ENCODE measurements at regions of chr7 and their contacts with region 1.

Region 1: DNA sequence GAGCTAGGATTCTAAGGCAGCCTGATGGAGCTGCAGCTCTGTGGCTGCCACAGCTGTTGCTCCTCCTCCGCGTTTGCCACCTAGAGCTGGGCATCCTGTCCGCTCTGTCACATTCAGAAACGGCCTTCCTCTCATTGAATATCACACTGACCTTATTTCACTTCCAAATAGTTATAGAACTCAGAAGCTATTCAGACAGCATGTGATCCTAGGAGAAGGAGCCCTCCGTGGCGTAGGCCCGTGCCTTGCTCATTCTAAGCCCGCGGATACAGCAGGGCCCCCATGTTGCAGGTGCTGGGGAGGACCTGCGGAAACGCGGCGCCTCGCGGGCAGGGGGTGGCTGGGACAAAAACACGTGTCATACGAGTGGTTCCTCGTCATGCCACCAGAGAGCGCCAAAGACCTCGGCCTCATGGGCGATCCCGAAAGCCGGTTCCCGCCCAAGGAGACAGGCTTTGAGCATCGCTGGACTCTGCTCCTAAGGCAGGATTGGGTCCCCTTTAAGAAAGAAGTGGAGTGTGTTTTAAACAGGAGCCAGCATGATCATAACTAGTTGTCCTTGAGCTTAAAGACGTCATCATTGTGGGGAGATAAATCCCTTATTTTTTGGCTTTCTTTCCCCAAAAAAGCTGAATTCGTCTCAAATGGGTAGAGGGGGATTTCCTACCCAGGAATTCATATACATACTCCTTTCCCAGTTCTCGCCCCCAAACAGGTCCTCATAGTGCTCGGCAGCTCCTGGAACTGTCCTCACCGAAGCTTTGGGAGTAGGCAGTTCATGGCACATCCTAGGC is 17.9 kb upstream of the FIGNL1 start:
- DNase-seq: no peak
- ATAC-seq: peak; percentile 95
- H3K4me3 ChIP-seq: no peak overlapping the region
- H3K27ac ChIP-seq: no peak overlapping the region
- H3K4me1 ChIP-seq: no peaks in the 10 kb centered on the region
- H3K27me3 ChIP-seq: no peaks in the 10 kb centered on the region; a peak in 2 of 4 replicates
- CTCF ChIP-seq: peak; percentile 78 to 90 (median 85)
- EP300 ChIP-seq: no peak
- POLR2A ChIP-seq: no peak
- RAD21 ChIP-seq: peak; percentile 85

Region 2: GRCh38 chr7:49714182-49714581 is 753.8 kb before region 1 on chr7:
- CTCF ChIA-PET with region 1: no interaction called
- POLR2A ChIA-PET with region 1: no interaction called
- RAD21 ChIA-PET with region 1: no interaction called
- SMC1A ChIA-PET with region 1: no interaction called
- in situ Hi-C with region 1: no loop called
- intact Hi-C with region 1: no loop called
- DNase-seq: no peak
- ATAC-seq: no peak
- H3K4me3 ChIP-seq: no peak overlapping the region
- H3K27ac ChIP-seq: no peak overlapping the region
- H3K4me1 ChIP-seq: no peaks in the 10 kb centered on the region
- H3K27me3 ChIP-seq: peaks cover 0 to 2% of the 10 kb centered on the region in 2 experiments; a peak in 2 of 4 replicates
- CTCF ChIP-seq: no peak
- EP300 ChIP-seq: no peak
- POLR2A ChIP-seq: no peak
- RAD21 ChIP-seq: no peak

Region 3: DNA sequence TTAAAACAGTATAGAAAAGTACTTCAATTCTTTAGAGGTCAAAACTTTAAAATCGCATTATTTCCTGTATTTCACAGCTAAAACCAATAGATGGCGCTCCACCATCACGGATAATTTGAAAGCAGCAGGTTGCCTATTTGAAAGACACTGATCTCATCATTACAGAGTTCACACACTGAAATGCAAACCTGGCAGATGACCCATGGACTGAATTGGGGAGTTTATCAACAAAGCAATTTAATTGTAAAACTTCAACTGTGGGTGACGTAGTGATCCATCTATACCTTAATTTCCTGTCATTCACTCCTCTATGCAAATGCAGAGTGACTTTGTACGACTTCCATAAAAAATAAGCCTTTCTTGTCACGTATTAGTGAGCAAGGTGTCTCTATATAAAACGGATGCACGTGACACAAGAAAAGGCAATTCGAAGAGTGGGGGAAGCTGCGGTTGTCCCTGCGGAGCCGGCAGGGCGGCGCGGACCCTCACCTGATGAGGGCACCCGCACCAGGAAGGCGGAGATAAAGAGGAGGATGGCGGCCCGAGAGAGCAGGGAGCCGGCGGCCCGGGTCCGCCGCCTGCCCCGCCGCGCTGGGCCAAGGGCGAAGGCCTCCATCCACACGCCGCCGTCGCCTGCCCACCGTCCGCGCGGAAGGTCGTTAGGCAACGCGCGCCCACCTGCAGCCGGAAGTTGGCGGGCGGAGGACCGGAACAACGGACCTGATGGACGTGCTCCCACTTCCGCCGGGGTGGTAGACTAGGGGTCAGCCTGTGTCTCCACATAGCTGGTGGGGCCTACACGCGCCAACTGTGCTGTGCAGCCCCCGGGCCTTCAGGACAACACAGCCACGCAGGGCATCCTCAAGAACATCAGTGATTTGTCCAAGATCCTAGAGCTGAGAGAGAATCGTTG is 375.2 kb before region 1 on chr7 and contains the start of gene ZPBP:
- CTCF ChIA-PET with region 1: interaction called, 13 read pairs
- POLR2A ChIA-PET with region 1: no interaction called
- RAD21 ChIA-PET with region 1: interaction called, 3 read pairs
- SMC1A ChIA-PET with region 1: interaction called, 15 read pairs
- in situ Hi-C with region 1: no loop called
- intact Hi-C with region 1: loop called (anchors 2 kb)
- DNase-seq: peak; percentile 30
- ATAC-seq: peak; percentile 77
- H3K4me3 ChIP-seq: peak within 1 kb of the TSS; percentile 38; the same call in 1 of the 2 replicates
- H3K27ac ChIP-seq: no peak within 1 kb of the TSS
- H3K4me1 ChIP-seq: no peaks in the 10 kb centered on the region
- H3K27me3 ChIP-seq: no peaks in the 10 kb centered on the region
- CTCF ChIP-seq: peak; percentile 54 to 72 (median 68); a peak in 5 of 6 replicates
- EP300 ChIP-seq: no peak
- POLR2A ChIP-seq: peak; percentile 58
- RAD21 ChIP-seq: peak; percentile 95
- polyA plus RNA-seq, gene ZPBP: not detected

Region 4: GRCh38 chr7:50364645-50365044 is 103.4 kb before region 1 on chr7:
- CTCF ChIA-PET with region 1: no interaction called
- POLR2A ChIA-PET with region 1: no interaction called
- RAD21 ChIA-PET with region 1: no interaction called
- SMC1A ChIA-PET with region 1: no interaction called
- in situ Hi-C with region 1: no loop called
- intact Hi-C with region 1: no loop called
- DNase-seq: no peak
- ATAC-seq: no peak
- H3K4me3 ChIP-seq: no peak overlapping the region
- H3K27ac ChIP-seq: no peak overlapping the region
- H3K4me1 ChIP-seq: peaks cover 20% of the 10 kb centered on the region
- H3K27me3 ChIP-seq: no peaks in the 10 kb centered on the region
- CTCF ChIP-seq: no peak
- EP300 ChIP-seq: no peak
- POLR2A ChIP-seq: no peak
- RAD21 ChIP-seq: no peak

Region 5: GRCh38 chr7:50449881-50450589 is 18.0 kb before region 1 on chr7 and contains the start of gene FIGNL1:
- CTCF ChIA-PET with region 1: interaction called, 15 read pairs
- POLR2A ChIA-PET with region 1: no interaction called
- RAD21 ChIA-PET with region 1: no interaction called
- SMC1A ChIA-PET with region 1: no interaction called
- in situ Hi-C with region 1: no loop called
- intact Hi-C with region 1: no loop called
- DNase-seq: peak; percentile 59
- ATAC-seq: peak; percentile 93
- H3K4me3 ChIP-seq: peak within 1 kb of the TSS; percentile 77
- H3K27ac ChIP-seq: peak within 1 kb of the TSS; percentile 28
- H3K4me1 ChIP-seq: peaks cover 16% of the 10 kb centered on the region
- H3K27me3 ChIP-seq: no peaks in the 10 kb centered on the region; a peak in 1 of 4 replicates
- CTCF ChIP-seq: no peak
- EP300 ChIP-seq: no peak
- POLR2A ChIP-seq: peak; percentile 90
- RAD21 ChIP-seq: no peak
- polyA plus RNA-seq, gene FIGNL1: 11.5 to 11.6 TPM

Region 6: DNA sequence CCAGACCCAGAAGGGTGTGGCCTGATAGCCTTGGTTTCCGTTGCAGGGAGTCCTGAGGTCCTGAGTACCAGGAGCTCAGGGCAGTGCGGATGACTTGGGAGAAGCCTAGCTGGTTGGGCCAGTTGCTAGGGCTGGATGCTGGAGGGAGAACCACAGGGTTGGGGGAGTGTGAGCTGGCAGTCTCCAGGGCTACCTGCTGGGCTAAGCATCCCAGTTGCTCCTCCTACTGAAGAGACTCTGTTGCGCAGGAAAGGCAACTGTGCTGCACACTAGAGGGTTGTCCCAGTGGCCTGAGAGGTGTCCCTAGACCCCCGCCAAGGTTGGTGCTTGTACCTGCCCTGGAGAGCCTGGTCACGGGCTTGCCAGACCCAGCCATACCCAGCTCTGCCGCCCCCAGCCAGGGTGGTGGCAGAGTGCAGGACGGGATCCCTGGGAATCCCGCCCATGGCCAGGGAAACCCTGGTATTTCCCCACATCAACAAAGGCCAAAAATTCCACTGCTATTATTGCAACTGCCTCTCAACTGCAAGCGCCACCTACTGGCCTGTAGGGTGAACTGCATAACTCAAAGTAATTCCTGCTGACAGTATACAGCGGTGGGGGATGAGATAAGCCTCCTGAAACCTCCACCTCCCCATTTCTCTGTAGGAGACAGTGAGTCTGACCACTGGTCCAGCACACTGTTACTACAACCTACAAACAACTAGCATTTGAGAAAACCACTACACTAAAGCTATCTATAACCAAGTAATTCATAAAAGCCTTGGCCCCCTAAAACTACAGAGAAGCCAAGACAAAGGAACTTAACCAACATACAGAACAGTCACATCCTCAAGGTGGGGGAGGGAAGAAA is 164.8 kb after region 1 on chr7:
- CTCF ChIA-PET with region 1: interaction called, 48 read pairs
- POLR2A ChIA-PET with region 1: no interaction called
- RAD21 ChIA-PET with region 1: interaction called, 4 read pairs
- SMC1A ChIA-PET with region 1: interaction called, 5 read pairs
- in situ Hi-C with region 1: no loop called
- intact Hi-C with region 1: loop called (anchors 1 kb)
- DNase-seq: no peak
- ATAC-seq: peak; percentile 91
- H3K4me3 ChIP-seq: no peak overlapping the region
- H3K27ac ChIP-seq: no peak overlapping the region
- H3K4me1 ChIP-seq: no peaks in the 10 kb centered on the region
- H3K27me3 ChIP-seq: peaks cover 0 to 1% of the 10 kb centered on the region in 2 experiments; a peak in 3 of 4 replicates
- CTCF ChIP-seq: peak; percentile 73 to 95 (median 88)
- EP300 ChIP-seq: no peak
- POLR2A ChIP-seq: no peak
- RAD21 ChIP-seq: peak; percentile 65

Region 7: DNA sequence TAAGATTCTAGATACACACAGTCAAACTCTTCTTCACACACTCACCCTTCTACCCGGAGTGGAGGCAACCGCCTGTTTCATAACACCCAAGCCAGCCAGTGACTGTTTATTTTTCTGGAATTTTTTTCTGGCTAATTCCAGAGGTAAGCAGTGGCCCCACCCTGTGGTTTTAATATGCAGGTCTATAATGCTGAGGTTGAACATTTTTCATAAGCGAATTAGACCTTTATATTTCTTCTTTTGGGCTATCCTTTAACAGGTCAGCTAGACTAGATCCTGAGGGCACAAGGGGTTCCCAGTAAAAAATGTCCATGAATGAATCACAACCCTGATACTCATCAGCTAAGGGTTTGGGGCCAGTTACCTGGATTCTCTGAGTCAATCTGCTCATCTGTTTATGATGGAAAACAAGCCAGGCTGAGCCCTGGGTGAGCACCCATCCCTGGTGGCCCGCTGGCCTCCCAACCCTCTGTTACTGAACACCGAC is 238.5 kb after region 1 on chr7:
- CTCF ChIA-PET with region 1: no interaction called
- POLR2A ChIA-PET with region 1: no interaction called
- RAD21 ChIA-PET with region 1: no interaction called
- SMC1A ChIA-PET with region 1: no interaction called
- in situ Hi-C with region 1: no loop called
- intact Hi-C with region 1: no loop called
- DNase-seq: no peak
- ATAC-seq: no peak
- H3K4me3 ChIP-seq: no peak overlapping the region
- H3K27ac ChIP-seq: no peak overlapping the region
- H3K4me1 ChIP-seq: no peaks in the 10 kb centered on the region
- H3K27me3 ChIP-seq: peaks cover 3 to 4% of the 10 kb centered on the region in 2 experiments
- CTCF ChIP-seq: no peak
- EP300 ChIP-seq: no peak
- POLR2A ChIP-seq: no peak
- RAD21 ChIP-seq: no peak

Region 8: GRCh38 chr7:51154201-51154600 is 686.2 kb after region 1 on chr7:
- CTCF ChIA-PET with region 1: interaction called, 7 read pairs
- POLR2A ChIA-PET with region 1: no interaction called
- RAD21 ChIA-PET with region 1: interaction called, 27 read pairs
- SMC1A ChIA-PET with region 1: no interaction called
- in situ Hi-C with region 1: loop called (anchors 10 kb)
- intact Hi-C with region 1: no loop called
- DNase-seq: no peak
- ATAC-seq: no peak
- H3K4me3 ChIP-seq: no peak overlapping the region
- H3K27ac ChIP-seq: no peak overlapping the region
- H3K4me1 ChIP-seq: no peaks in the 10 kb centered on the region
- H3K27me3 ChIP-seq: peaks cover 0 to 3% of the 10 kb centered on the region in 2 experiments; a peak in 2 of 4 replicates
- CTCF ChIP-seq: no peak
- EP300 ChIP-seq: no peak
- POLR2A ChIP-seq: no peak
- RAD21 ChIP-seq: no peak

Measured in GM12878 (cell line).